Naive thymus-derived CD4-positive, alpha-beta T cell (primary cell): ENCODE measurements at regions of chr17 and their contacts with region 1.

Region 1: GRCh38 chr17:3048767-3049471 is 14.5 kb downstream of the OR1D5 start:
- DNase-seq: peak; percentile 76 to 95 (median 91)
- ATAC-seq: peak; percentile 98
- H3K4me3 ChIP-seq: peak overlapping the region; percentile 83
- H3K4me3 Mint-ChIP-seq: peak overlapping the region; percentile 86 to 94 (median 92)
- H3K27ac ChIP-seq: peak overlapping the region; percentile 60
- H3K27ac Mint-ChIP-seq: peak overlapping the region; percentile 46 to 91 (median 86)
- H3K4me1 ChIP-seq: peaks cover 0 to 6% of the 10 kb centered on the region in 2 donors
- H3K4me1 Mint-ChIP-seq: peaks cover 0 to 15% (median 9%) of the 10 kb centered on the region in 7 donors
- H3K27me3 ChIP-seq: no peaks in the 10 kb centered on the region
- H3K27me3 Mint-ChIP-seq: peaks cover 0 to 6% (median 0%) of the 10 kb centered on the region in 5 donors

Region 2: DNA sequence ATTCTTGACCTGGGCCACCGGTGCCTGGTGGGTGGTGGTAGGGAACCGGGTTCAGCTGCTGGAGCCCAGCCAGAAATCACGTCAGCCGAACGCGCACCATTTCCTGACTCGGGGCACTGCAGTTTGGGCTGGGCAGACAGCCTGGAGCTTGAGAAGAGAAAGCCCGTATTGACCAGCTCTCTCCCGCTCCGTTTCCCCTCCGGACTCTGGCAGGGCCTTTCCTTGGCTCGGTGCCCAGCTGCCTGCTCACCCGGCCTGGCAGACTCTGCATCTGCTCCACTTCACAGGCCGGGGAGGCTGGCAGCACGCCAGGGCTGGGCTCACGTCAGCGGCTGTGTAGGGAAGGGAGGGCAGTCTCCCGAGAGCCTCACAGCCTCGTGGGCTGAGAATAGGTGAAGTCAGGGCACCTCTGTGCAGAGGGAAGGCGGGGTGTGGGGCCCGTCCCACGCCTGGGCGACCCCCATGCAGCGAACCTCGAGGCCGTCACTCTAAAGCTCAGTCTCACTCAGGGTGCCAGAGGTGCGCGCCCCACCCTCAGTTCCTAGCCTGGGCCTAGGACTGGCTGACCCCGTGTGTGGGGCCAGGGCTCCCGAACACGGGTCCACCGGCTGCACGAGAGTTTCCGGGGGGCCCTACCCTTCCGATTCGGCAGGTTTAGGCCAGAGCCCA is 44.7 kb before region 1 on chr17:
- CTCF ChIA-PET with region 1: no interaction called
- POLR2A ChIA-PET with region 1: no interaction called
- intact Hi-C with region 1: loop called in 1 of 2 experiments (anchors 1 kb)
- DNase-seq: peak in 8 of 9 donors; percentile 61 to 76 (median 72)
- ATAC-seq: peak; percentile 87
- H3K4me3 ChIP-seq: peak overlapping the region; percentile 57
- H3K4me3 Mint-ChIP-seq: peak overlapping the region in 9 of 10 donors; percentile 79 to 88 (median 84)
- H3K27ac ChIP-seq: peak overlapping the region; percentile 48
- H3K27ac Mint-ChIP-seq: peak overlapping the region in 8 of 9 donors; percentile 72 to 92 (median 86)
- H3K4me1 ChIP-seq: peaks cover 0 to 21% of the 10 kb centered on the region in 2 donors
- H3K4me1 Mint-ChIP-seq: peaks cover 0 to 36% (median 23%) of the 10 kb centered on the region in 7 donors
- H3K27me3 ChIP-seq: no peaks in the 10 kb centered on the region
- H3K27me3 Mint-ChIP-seq: no peaks in the 10 kb centered on the region

Region 3: DNA sequence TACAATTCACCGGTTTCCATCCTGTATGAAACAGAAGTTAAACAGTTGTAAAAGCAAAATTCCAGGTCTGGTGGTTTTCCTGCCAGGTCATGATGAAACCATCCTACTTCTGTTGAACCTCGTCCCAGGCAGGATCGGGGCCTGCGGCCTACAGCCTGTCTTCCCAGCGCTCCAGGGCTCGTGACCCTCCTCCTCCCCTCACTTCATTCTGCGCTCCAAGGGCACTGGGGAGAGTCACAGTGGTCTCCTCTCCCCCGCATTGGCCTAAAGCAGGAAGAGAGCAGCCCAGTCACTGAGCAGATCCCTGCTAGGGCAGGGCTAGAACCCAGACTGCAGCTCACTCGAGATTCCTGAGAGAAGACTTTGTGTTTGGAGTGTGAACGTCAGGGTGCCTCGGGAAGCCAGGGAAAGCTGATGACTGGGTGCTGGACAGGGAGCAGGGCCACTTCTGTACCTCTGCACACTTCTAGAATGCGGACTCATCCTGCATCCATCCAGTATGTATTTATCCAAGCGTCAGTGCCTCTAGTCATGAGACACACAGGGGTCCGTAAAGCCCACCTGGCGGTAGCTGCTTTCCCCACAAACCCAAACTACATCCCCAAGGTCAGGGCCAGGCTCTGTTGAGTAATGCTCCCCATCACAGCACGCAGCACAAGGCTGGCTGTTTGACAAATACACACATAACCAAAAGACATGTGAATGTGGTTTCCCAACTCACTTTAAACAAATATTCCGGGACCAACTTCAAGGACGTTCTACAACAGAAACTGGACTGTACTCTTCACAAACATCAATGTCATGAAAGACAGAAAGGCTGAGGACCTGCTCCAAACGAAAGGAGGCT is 753.8 kb after region 1 on chr17:
- CTCF ChIA-PET with region 1: no interaction called
- POLR2A ChIA-PET with region 1: no interaction called
- intact Hi-C with region 1: no loop called
- DNase-seq: no peak
- ATAC-seq: peak; percentile 36
- H3K4me3 ChIP-seq: no peak overlapping the region
- H3K4me3 Mint-ChIP-seq: no peak overlapping the region
- H3K27ac ChIP-seq: no peak overlapping the region
- H3K27ac Mint-ChIP-seq: peak overlapping the region in 1 of 9 donors; percentile 4
- H3K4me1 ChIP-seq: peaks cover 0 to 2% of the 10 kb centered on the region in 2 donors
- H3K4me1 Mint-ChIP-seq: peaks cover 0 to 26% (median 0%) of the 10 kb centered on the region in 7 donors
- H3K27me3 ChIP-seq: no peaks in the 10 kb centered on the region
- H3K27me3 Mint-ChIP-seq: no peaks in the 10 kb centered on the region

Region 4: DNA sequence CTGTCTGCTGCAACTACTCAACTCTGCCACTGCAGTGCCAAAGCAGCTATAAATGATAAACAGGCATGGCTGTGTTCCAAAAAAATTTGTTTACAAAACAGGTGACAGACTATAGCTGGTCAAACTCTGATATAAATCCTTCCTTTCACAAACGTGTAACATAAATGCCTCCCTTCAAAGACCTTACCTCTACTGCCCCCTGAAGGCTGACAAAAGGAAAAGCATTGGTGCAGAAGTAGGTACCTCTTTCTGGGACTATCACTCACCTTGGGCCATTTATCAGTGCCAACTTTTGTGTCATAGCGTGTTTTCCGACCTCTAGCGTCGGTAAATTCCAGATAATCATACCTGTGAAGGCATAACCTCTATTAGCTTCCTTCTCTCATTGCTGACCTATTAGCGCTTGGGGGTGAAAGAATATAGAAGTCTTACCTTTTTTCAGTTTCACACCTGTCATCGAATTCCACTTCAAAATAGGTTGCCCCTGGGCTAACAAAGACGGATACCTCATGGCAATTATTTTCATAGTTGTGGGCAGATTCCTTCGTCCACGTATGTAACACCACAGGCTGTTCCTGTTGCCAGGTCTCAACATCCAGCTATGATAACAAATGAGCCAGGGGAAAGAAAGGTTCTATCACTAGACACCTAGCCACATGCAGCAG is 1026.0 kb after region 1 on chr17:
- CTCF ChIA-PET with region 1: no interaction called
- POLR2A ChIA-PET with region 1: interaction called, 6 read pairs
- intact Hi-C with region 1: loop called in 1 of 2 experiments (anchors 10 kb)
- DNase-seq: peak in 7 of 9 donors; percentile 9 to 56 (median 42)
- ATAC-seq: peak; percentile 75
- H3K4me3 ChIP-seq: no peak overlapping the region
- H3K4me3 Mint-ChIP-seq: no peak overlapping the region
- H3K27ac ChIP-seq: no peak overlapping the region
- H3K27ac Mint-ChIP-seq: peak overlapping the region in 2 of 9 donors; percentile 39 to 41
- H3K4me1 ChIP-seq: no peaks in the 10 kb centered on the region
- H3K4me1 Mint-ChIP-seq: no peaks in the 10 kb centered on the region
- H3K27me3 ChIP-seq: no peaks in the 10 kb centered on the region
- H3K27me3 Mint-ChIP-seq: no peaks in the 10 kb centered on the region